Calu3 (cell line): ENCODE measurements at regions of chr16 and their contacts with region 1.

Region 1: DNA sequence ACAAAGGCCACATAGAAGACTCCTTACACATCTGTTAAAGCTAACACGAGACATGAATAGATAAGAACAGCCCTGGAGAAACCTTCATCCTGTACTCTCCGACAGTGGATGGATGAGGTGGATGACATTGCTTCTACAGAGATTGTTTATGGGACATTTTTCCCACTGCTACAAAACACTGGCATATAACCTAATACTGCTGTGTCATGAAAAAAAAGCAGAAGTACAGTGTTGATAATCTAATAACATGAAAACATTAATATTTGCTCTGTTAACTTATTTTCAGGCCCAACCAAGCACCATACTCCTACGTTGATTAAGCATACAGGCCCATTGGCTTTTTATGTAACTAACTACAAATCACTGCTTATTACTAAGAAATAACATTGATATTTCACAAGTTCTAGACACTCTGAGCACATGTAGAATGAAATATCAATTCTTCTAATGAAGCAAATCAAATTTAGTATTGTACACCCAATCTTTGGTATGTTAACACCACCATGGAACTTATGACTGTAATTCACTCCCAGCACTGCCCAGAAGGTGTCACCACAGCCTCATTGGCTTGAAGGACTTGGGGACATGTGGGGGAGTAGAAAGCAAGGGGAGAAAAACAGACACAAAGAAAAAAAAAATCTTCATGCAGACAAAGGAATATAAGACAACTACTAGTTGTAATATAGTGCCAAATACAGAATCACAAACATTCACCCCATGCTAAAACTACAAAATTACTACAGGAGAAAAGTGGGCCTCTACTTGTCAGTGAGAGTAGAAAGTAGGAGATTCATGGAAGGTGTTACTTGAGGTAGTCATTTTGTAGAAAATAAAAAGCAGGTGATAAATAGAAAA is 330.0 kb upstream of the PMFBP1 start:
- DNase-seq: peak; percentile 70
- H3K4me3 Mint-ChIP-seq: no peak overlapping the region
- H3K27ac Mint-ChIP-seq: no peak overlapping the region
- H3K4me1 Mint-ChIP-seq: no peaks in the 10 kb centered on the region
- H3K27me3 Mint-ChIP-seq: no peaks in the 10 kb centered on the region
- CTCF ChIP-seq: peak; percentile 74

Region 2: GRCh38 chr16:72787514-72788268 is 285.7 kb after region 1 on chr16:
- CTCF ChIA-PET with region 1: no interaction called
- intact Hi-C with region 1: loop called (anchors 10 kb)
- DNase-seq: peak; percentile 37
- H3K4me3 Mint-ChIP-seq: peak overlapping the region; percentile 38
- H3K27ac Mint-ChIP-seq: peak overlapping the region; percentile 37
- H3K4me1 Mint-ChIP-seq: peaks cover 12% of the 10 kb centered on the region
- H3K27me3 Mint-ChIP-seq: no peaks in the 10 kb centered on the region
- CTCF ChIP-seq: no peak

Region 3: DNA sequence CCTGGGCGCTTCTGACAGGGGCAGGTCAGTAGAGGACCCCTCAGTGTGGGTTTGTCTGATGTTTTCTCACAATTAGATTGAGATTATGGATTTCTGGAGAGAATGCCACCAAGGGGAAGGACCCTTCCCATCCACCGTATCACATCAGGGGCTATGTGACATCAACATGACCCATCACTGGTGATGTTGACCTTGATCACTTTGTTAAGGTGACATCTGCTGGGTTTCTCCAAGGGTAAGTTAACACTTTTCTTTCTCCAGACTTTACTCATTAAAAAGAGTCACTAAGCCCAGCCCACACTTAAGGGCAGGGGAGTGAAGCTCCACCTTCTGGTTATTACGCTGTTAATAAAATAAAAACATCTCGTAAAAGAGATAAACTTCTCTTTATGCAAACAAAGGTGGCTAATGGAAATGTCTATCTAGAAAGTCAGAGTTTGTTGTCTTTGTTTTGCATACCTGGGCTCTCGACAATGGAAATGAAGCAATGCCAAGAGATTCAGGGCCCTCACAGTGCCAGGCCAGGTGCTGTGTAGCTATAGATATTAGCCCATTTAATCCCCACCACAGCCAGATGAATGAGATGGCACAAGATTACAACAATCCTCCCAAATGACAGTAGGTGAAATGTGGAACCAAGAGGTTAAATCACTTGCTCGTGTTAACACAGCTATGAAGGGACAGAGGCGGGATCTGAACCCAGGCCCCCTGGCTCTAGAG is 411.6 kb after region 1 on chr16:
- CTCF ChIA-PET with region 1: no interaction called
- intact Hi-C with region 1: no loop called
- DNase-seq: no peak
- H3K4me3 Mint-ChIP-seq: no peak overlapping the region
- H3K27ac Mint-ChIP-seq: no peak overlapping the region
- H3K4me1 Mint-ChIP-seq: no peaks in the 10 kb centered on the region
- H3K27me3 Mint-ChIP-seq: no peaks in the 10 kb centered on the region
- CTCF ChIP-seq: no peak

Region 4: DNA sequence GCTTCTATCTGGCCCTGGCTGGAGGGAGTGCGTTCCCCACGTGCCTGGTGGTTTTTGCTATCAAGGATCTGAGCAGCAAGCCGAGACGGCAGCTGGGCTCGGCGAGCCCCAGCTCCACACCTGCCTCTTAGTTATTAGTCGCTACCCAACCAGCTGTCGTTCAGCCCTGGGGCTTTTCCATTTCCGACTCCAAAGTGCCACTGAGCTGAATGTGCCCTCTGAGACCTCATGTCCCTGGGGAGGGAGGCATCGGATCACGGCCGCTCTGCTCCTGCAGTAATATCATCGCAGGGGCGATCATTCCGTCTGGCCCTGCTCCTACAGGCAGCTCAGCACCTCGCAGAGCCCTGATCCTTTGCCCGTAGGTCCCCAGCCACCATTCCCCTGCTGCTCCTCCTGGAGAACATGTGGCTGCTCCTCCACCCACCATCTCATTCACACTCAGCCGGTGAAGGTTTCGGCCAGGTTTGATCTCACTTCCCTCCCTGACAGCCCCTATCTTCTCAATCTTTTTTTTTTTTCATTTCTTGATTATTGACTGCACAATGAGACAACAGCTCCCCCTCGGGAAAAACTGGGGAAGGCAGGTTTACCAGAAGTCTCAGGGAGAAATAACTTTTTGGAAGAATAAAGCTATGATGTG is 459.3 kb after region 1 on chr16:
- CTCF ChIA-PET with region 1: no interaction called
- intact Hi-C with region 1: loop called (anchors 10 kb)
- DNase-seq: peak; percentile 43
- H3K4me3 Mint-ChIP-seq: peak overlapping the region; percentile 21
- H3K27ac Mint-ChIP-seq: no peak overlapping the region
- H3K4me1 Mint-ChIP-seq: peaks cover 27% of the 10 kb centered on the region
- H3K27me3 Mint-ChIP-seq: no peaks in the 10 kb centered on the region
- CTCF ChIP-seq: peak; percentile 64

Region 5: DNA sequence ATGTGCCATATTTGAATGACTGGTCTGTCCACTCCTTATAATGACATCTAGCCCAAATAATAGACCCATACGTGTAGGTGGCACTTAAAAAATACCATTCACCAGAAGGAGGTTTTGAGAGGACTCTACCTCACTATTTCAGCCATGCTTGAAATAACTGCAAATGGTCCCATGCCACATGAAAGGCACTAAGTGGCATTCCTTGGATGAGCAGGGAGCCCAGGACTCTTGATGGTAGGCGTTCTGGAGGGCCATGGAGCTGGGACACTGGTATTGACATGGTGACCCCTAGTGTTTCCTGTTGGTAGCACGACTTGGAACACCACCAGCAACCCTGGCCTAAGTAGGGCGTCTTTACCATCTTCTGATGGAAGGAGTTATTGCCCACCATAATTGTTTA is 694.7 kb after region 1 on chr16:
- CTCF ChIA-PET with region 1: no interaction called
- intact Hi-C with region 1: loop called (anchors 5 kb)
- DNase-seq: peak; percentile 75
- H3K4me3 Mint-ChIP-seq: no peak overlapping the region
- H3K27ac Mint-ChIP-seq: no peak overlapping the region
- H3K4me1 Mint-ChIP-seq: no peaks in the 10 kb centered on the region
- H3K27me3 Mint-ChIP-seq: peaks cover 17% of the 10 kb centered on the region
- CTCF ChIP-seq: peak; percentile 60

Region 6: GRCh38 chr16:73527182-73527581 is 1025.2 kb after region 1 on chr16:
- CTCF ChIA-PET with region 1: no interaction called
- intact Hi-C with region 1: loop called (anchors 10 kb)
- DNase-seq: no peak
- H3K4me3 Mint-ChIP-seq: no peak overlapping the region
- H3K27ac Mint-ChIP-seq: no peak overlapping the region
- H3K4me1 Mint-ChIP-seq: no peaks in the 10 kb centered on the region
- H3K27me3 Mint-ChIP-seq: peaks cover 74% of the 10 kb centered on the region
- CTCF ChIP-seq: no peak

Region 7: DNA sequence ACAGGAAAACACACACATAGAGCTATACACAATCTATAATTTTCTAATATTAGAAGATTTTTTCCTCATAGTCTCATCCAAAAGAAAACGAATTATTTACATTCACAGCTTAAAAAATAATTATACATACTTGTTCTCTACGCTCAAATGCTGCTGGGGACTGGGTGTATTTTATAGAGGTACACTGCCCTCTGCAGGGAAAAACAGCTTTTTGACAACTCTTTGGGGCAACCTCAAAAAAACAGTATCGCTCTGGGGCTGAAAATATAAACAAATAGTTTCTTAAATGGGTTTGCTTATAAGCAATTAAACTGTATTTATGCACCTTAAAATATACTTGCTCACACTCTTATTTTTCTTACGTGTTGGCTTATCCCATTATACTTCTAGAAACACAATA is 1532.9 kb after region 1 on chr16:
- CTCF ChIA-PET with region 1: no interaction called
- intact Hi-C with region 1: loop called (anchors 10 kb)
- DNase-seq: peak; percentile 36
- H3K4me3 Mint-ChIP-seq: no peak overlapping the region
- H3K27ac Mint-ChIP-seq: no peak overlapping the region
- H3K4me1 Mint-ChIP-seq: no peaks in the 10 kb centered on the region
- H3K27me3 Mint-ChIP-seq: peaks cover 20% of the 10 kb centered on the region
- CTCF ChIP-seq: no peak